A673 (cell line): ENCODE measurements at regions of chr10 and their contacts with region 1.

Region 1: DNA sequence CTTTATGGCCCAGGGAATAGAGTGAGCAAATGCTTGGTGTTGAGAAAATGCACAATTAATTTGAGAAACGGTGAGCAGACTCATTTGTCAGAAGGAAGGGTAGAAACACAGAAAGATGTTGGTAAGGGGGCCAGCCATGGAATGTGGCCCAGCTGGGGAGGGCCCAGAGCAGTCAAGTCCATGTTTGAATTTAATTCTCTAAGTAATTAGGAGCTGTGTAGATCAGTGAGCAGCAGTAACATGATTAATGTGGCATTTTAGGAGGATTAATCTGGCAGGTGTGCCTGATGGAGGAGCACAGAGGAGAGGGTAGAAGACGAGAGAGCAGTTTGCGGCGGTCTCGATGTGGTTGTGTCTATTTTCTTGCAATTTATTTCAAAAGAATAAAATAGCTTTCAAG is 218.7 kb downstream of the FRMD4A start:
- DNase-seq: no peak
- H3K4me3 ChIP-seq: no peak overlapping the region
- H3K27ac ChIP-seq: no peak overlapping the region
- H3K4me1 ChIP-seq: no peaks in the 10 kb centered on the region
- H3K27me3 ChIP-seq: peaks cover 14% of the 10 kb centered on the region
- CTCF ChIP-seq: no peak

Region 2: GRCh38 chr10:14142606-14143250 is 30.7 kb after region 1 on chr10:
- CTCF ChIA-PET with region 1: no interaction called
- POLR2A ChIA-PET with region 1: interaction called, 12 read pairs
- intact Hi-C with region 1: no loop called
- DNase-seq: no peak
- H3K4me3 ChIP-seq: no peak overlapping the region
- H3K27ac ChIP-seq: no peak overlapping the region
- H3K4me1 ChIP-seq: no peaks in the 10 kb centered on the region
- H3K27me3 ChIP-seq: peaks cover 40% of the 10 kb centered on the region
- CTCF ChIP-seq: no peak